ENCODE measurements at regions of chr21 and their contacts with region 1.

Region 1: DNA sequence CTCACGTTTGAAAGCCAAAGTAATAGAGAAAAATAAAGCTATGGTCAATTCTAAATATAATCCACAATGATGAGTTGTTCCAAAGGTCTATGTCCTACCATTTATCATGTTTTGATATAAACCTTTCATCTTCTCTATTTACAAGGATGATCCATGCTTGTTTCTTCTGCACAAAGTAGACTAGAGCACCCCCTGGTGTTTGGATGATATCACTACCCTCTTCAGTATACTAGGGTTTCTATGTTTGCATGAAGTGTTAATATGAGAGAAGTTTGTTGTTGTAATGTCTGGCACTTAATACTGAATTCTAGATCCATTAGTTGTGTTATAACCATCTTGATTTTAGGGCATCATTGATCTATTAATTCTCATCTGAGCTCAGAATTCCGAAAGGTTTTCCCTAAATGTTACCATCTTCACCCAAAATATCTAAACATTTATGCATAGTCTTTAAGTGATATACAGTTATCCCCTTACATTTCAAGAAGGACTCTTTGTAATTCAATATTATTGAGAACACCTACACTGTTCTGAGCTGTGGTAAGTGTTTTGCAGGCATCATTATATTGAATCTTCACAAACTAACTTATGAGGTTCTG is 21.1 kb downstream of the CLDN8 start:
- ATAC-seq: peak in 4 of 8 experiments; percentile 51 to 85 (median 74)
- H3K4me3 ChIP-seq: no peak overlapping the region
- H3K27ac ChIP-seq: no peak overlapping the region
- H3K4me1 ChIP-seq: no peaks in the 10 kb centered on the region

Region 2: GRCh38 chr21:29777155-29777554 is 417.6 kb before region 1 on chr21:
- in situ Hi-C with region 1: no loop called
- ATAC-seq: no peak
- H3K4me3 ChIP-seq: no peak overlapping the region
- H3K27ac ChIP-seq: no peak overlapping the region
- H3K4me1 ChIP-seq: no peaks in the 10 kb centered on the region

Region 3: DNA sequence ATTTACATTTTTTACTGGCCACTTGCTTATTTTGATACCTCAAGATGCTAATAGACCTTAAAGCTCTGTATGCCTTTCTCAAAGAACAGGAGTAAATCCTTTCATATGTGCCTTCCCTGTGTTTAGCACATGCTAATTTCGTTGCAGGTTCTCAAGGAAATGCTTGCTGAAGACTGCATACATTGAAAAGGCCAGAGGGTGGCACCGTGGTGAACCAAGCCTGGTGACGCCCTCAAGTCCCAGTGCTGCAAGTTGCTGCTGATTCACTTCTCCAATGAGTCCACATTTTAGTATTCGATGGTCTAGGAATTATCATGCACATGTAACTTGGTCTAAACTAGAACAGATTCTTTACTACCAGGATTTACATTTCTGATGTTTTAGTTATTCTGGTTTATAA is 122.3 kb before region 1 on chr21:
- in situ Hi-C with region 1: loop called in 1 of 9 experiments (anchors 25 kb)
- ATAC-seq: peak in 6 of 8 experiments; percentile 35 to 100 (median 77)
- H3K4me3 ChIP-seq: no peak overlapping the region
- H3K27ac ChIP-seq: no peak overlapping the region
- H3K4me1 ChIP-seq: no peaks in the 10 kb centered on the region